ENCODE measurements at regions of chr18 and their contacts with region 1.

Region 1: DNA sequence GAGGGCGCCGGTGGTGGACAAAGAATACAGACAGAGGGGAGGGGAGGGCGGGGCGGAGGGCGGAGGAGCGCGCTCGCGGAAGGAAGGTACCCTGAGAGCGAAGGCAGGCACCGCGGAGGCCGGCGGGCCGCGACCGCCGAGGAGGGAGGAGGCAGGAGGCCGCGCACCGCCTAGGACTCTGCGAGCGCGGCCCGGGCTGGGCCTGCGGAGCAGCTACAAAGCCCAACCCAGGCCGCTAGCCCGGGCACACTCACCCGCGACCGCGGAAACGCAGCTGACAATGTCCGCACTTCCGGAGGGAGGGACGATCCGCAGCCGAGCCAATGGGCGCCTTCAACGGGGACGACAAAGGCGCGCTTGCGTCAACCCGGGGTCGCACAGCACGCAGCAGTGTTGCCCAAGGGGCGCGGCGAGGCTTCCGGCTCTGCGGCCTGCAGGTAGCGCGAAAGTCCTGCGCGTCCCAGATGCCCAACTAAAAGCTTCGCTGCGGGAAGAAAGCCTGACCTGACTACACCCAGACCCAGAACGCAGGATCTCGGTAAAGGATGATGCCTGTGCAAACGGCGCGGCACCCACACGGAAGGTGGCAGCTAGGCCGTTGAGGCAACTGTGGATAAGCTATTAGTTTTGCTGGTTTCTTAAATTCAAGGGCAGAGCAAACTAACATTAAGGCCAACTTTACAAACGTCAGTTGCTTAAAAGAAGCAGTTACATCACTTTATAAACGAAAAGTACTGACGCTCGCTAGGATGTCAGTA is at the start of gene C18orf32:
- DNase-seq: peak; percentile 94 to 96
- ATAC-seq: peak; percentile 89 to 97 (median 92)
- H3K4me3 ChIP-seq: peak within 1 kb of the TSS; percentile 81
- H3K4me3 Mint-ChIP-seq: peak within 1 kb of the TSS; percentile 88
- H3K27ac ChIP-seq: peak within 1 kb of the TSS; percentile 93
- H3K27ac Mint-ChIP-seq: peak within 1 kb of the TSS; percentile 95 to 97
- H3K4me1 ChIP-seq: peaks cover 27% of the 10 kb centered on the region
- H3K4me1 Mint-ChIP-seq: peaks cover 49 to 67% of the 10 kb centered on the region in 2 donors
- H3K27me3 ChIP-seq: no peaks in the 10 kb centered on the region
- H3K27me3 Mint-ChIP-seq: no peaks in the 10 kb centered on the region
- CTCF ChIP-seq: no peak
- total RNA-seq, gene C18orf32: 18.8 to 28.0 (median 23.9) TPM

Region 2: DNA sequence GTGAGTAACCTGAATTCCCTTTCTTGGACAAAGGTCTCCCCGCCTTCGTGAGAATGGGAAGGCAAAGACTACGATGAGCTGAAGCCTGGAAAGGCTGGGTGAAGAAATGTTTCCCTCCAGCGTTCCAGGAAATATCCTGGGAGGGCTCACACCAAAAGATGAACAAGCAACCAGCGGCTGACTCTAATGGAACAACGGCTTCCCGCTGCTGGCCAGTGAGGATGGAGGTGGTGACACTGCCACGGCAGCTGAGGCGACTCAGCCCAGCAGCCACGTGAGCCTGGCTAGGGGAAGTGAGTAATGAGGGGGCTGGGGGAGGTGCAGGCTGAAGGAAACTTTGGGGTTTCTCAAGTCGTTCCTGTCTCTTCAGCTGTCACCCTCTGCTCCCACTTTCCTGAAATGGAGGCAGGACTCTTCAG is 431.4 kb before region 1 on chr18:
- intact Hi-C with region 1: loop called (anchors 10 kb)
- DNase-seq: peak; percentile 29 to 67
- ATAC-seq: peak; percentile 57 to 73 (median 70)
- H3K4me3 ChIP-seq: no peak overlapping the region
- H3K4me3 Mint-ChIP-seq: peak overlapping the region; percentile 76
- H3K27ac ChIP-seq: no peak overlapping the region
- H3K27ac Mint-ChIP-seq: peak overlapping the region; percentile 79 to 93
- H3K4me1 ChIP-seq: peaks cover 74% of the 10 kb centered on the region
- H3K4me1 Mint-ChIP-seq: peaks cover 74 to 75% of the 10 kb centered on the region in 2 donors
- H3K27me3 ChIP-seq: no peaks in the 10 kb centered on the region
- H3K27me3 Mint-ChIP-seq: no peaks in the 10 kb centered on the region
- CTCF ChIP-seq: no peak

Region 3: DNA sequence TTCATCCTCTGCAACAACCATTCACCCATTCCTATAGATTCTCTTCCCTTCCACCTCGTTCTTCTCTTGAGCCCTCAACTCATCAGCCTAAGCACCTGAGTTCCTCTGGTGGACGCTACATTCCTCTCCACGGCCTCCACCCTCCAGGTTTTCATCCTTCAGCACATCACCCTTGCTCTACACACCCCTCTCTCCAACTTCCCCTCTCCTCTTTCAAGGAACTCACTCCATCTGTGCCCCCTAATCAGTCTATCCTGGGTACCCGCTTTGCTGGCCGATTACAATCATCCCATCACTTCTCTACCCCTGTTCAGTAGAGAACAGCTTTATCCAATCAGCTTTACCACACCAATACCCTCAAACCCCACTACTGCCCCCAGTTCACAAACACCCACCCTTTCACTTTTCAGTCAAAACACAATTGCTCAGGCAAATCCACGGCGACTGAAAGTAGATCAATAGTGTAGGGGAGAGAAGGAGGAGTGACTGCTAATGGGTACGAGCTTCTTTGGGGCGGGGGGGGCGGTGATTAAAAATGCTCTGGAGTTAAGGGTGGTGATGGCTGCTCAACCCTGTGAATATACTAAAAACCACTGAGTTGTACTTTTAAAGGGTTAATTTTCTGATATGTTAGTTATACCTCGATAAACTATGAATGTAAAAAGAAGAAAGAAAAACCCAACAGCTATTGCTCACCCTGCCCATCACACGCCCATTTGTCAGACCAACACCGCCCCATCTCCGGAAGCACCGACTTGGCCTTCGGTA is 27.5 kb before region 1 on chr18:
- intact Hi-C with region 1: loop called (anchors 1 kb)
- DNase-seq: peak in 1 of 2 donors; percentile 50
- ATAC-seq: peak; percentile 41 to 58 (median 54)
- H3K4me3 ChIP-seq: peak overlapping the region; percentile 89
- H3K4me3 Mint-ChIP-seq: peak overlapping the region; percentile 90
- H3K27ac ChIP-seq: no peak overlapping the region
- H3K27ac Mint-ChIP-seq: peak overlapping the region; percentile 5 to 84
- H3K4me1 ChIP-seq: peaks cover 15% of the 10 kb centered on the region
- H3K4me1 Mint-ChIP-seq: peaks cover 38 to 46% of the 10 kb centered on the region in 2 donors
- H3K27me3 ChIP-seq: no peaks in the 10 kb centered on the region
- H3K27me3 Mint-ChIP-seq: no peaks in the 10 kb centered on the region
- CTCF ChIP-seq: no peak

Region 4: GRCh38 chr18:49813319-49814146 is 326.4 kb after region 1 on chr18 and contains the start of gene ACAA2:
- intact Hi-C with region 1: loop called (anchors 5 kb)
- DNase-seq: peak; percentile 83 to 88
- ATAC-seq: peak; percentile 77 to 90 (median 83)
- H3K4me3 ChIP-seq: peak within 1 kb of the TSS; percentile 93
- H3K4me3 Mint-ChIP-seq: peak within 1 kb of the TSS; percentile 99
- H3K27ac ChIP-seq: peak within 1 kb of the TSS; percentile 99
- H3K27ac Mint-ChIP-seq: peak within 1 kb of the TSS; percentile 77 to 99
- H3K4me1 ChIP-seq: peaks cover 35% of the 10 kb centered on the region
- H3K4me1 Mint-ChIP-seq: peaks cover 82 to 83% of the 10 kb centered on the region in 2 donors
- H3K27me3 ChIP-seq: no peaks in the 10 kb centered on the region
- H3K27me3 Mint-ChIP-seq: no peaks in the 10 kb centered on the region
- CTCF ChIP-seq: no peak
- total RNA-seq, gene ACAA2: 47.0 to 71.7 (median 59.2) TPM

Region 5: DNA sequence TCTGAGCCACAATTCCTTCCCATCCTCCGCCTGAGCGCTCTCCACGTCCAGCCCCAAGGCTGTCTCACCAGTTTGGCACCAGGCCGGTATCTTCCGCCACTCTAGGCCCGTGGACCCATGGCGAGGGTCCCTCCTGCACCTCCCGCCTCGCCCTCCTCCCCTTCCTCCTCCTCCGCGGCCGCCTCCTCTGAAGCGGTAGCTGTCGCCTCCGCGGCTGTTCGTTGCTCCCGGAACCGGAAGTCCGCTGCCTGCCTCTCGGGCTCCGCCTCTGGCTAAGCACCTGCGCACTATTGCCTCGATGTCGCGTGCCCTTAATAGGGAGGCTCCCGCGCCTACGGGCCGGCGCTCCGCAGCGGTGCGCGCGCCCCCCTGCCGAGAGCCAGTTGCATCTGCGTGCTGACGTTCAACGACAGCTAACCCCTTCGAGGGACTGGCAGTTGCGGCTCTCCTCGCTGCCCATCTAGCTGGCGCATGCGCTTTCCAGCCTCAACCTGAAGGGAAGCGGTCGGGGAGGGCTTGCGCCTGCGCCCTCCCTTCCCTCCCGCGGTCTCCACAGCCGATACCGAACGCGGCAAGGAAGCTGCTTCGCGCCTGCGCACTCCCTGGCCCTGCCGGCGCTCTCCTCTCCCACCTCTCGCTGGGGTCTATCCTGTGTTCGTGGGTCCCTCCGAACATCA is 794.3 kb after region 1 on chr18 and contains the start of gene MBD1:
- intact Hi-C with region 1: loop called (anchors 5 kb)
- DNase-seq: peak; percentile 94 to 100
- ATAC-seq: peak; percentile 92 to 96 (median 93)
- H3K4me3 ChIP-seq: peak within 1 kb of the TSS; percentile 89
- H3K4me3 Mint-ChIP-seq: peak within 1 kb of the TSS; percentile 94
- H3K27ac ChIP-seq: peak within 1 kb of the TSS; percentile 92
- H3K27ac Mint-ChIP-seq: peak within 1 kb of the TSS; percentile 92 to 99
- H3K4me1 ChIP-seq: peaks cover 34% of the 10 kb centered on the region
- H3K4me1 Mint-ChIP-seq: peaks cover 28 to 74% of the 10 kb centered on the region in 2 donors
- H3K27me3 ChIP-seq: no peaks in the 10 kb centered on the region
- H3K27me3 Mint-ChIP-seq: no peaks in the 10 kb centered on the region
- CTCF ChIP-seq: peak; percentile 13
- total RNA-seq, gene MBD1: 106 to 113 (median 111) TPM

Measured in natural killer cell (primary cell).